A549 (cell line): ENCODE measurements at regions of chr1 and their contacts with region 1.

Region 1: GRCh38 chr1:10387413-10388079 is 11.3 kb upstream of the PGD start:
- DNase-seq: peak; percentile 62 to 97
- ATAC-seq: peak; percentile 87 to 92
- H3K4me3 ChIP-seq: peak overlapping the region; percentile 14; the same call in 1 of the 3 replicates
- H3K27ac ChIP-seq: peak overlapping the region; percentile 99
- H3K4me1 ChIP-seq: peaks cover 72% of the 10 kb centered on the region
- CTCF ChIP-seq: no peak
- EP300 ChIP-seq: peak; percentile 75 to 88
- POLR2A ChIP-seq: no peak
- RAD21 ChIP-seq: peak in 1 of 2 experiments; percentile 17; a peak in 2 of 5 replicates

Region 2: GRCh38 chr1:10360045-10360444 is 27.5 kb before region 1 on chr1:
- CTCF ChIA-PET with region 1: no interaction called
- POLR2A ChIA-PET with region 1: no interaction called
- DNase-seq: no peak
- ATAC-seq: no peak
- H3K4me3 ChIP-seq: no peak overlapping the region
- H3K27ac ChIP-seq: no peak overlapping the region
- H3K4me1 ChIP-seq: no peaks in the 10 kb centered on the region
- CTCF ChIP-seq: no peak
- EP300 ChIP-seq: no peak
- POLR2A ChIP-seq: no peak
- RAD21 ChIP-seq: no peak

Region 3: GRCh38 chr1:10398734-10399623 is 11.4 kb after region 1 on chr1 and contains the start of gene PGD:
- CTCF ChIA-PET with region 1: interaction called, 22 read pairs
- POLR2A ChIA-PET with region 1: interaction called, 107 read pairs
- DNase-seq: peak; percentile 88 to 97
- ATAC-seq: peak; percentile 93
- H3K4me3 ChIP-seq: peak within 1 kb of the TSS; percentile 89
- H3K27ac ChIP-seq: peak within 1 kb of the TSS; percentile 95 to 99
- H3K4me1 ChIP-seq: peaks cover 13% of the 10 kb centered on the region
- CTCF ChIP-seq: no peak
- EP300 ChIP-seq: no peak
- POLR2A ChIP-seq: peak; percentile 50
- RAD21 ChIP-seq: no peak
- polyA plus RNA-seq, gene PGD: 700 and 1,019 TPM in 2 replicates

Region 4: DNA sequence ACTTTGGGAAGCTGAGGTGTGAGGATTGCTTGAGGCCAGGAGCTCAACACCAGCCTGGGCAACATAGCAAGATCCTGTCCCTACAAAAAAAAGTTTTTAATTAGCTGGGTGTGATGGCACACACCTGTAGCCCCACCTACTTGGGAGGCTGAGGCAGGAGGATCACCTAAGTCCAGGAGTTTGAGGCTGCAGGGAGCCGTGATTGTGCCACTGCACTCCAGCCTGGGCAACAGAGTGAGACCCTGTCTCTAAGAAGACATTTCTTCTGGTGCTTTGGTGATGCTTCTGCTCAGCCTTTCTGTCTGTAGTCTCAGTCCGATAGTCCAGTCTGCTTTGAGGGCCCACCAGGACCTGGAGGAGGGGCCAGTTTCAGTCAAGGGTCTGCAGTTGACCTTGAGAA is 19.7 kb after region 1 on chr1:
- CTCF ChIA-PET with region 1: interaction called, 3 read pairs
- POLR2A ChIA-PET with region 1: interaction called, 107 read pairs
- DNase-seq: no peak
- ATAC-seq: 0 out of 6 replicates have a peak, but pooled peaks of 1 of the 2 experiments have one; percentile 1
- H3K4me3 ChIP-seq: peak overlapping the region; percentile 17; the same call in 1 of the 3 replicates
- H3K27ac ChIP-seq: peak overlapping the region; percentile 95 to 99
- H3K4me1 ChIP-seq: peaks cover 96% of the 10 kb centered on the region
- CTCF ChIP-seq: no peak
- EP300 ChIP-seq: no peak
- POLR2A ChIP-seq: no peak
- RAD21 ChIP-seq: no peak